ENCODE measurements at regions of chr17 and their contacts with region 1.

Region 1: GRCh38 chr17:9284884-9285283 is 263.6 kb downstream of the NTN1 start:
- DNase-seq: no peak

Region 2: GRCh38 chr17:8997994-8998628 is 286.8 kb before region 1 on chr17:
- intact Hi-C with region 1: loop called (anchors 5 to 10 kb)
- DNase-seq: peak; percentile 88

Region 3: DNA sequence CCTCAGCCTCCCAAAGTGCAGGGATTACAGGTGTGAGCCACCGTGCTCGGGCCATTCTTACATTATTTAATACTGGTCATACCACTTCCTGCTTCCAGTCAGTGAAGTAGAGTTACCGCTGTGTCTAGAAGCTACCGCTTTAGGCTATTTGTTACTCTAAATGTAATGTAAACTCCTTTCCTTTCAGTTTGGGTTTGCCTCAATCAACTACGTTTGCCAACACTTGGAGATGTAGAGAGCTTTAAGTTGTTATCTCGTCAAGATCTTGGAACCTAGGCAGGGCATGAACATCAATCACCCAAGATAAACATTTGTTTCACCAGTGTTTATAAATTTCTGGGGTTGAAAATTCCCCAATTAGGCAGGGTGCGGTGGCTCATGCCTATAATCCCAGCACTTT is 14.8 kb after region 1 on chr17:
- intact Hi-C with region 1: loop called in 1 of 2 experiments (anchors 2 kb)
- DNase-seq: no peak

Measured in posterior vena cava (tissue), 2 donors.